Activated T-helper 1 cell treated with anti-CD3 and anti-CD28 coated beads, Interleukin-12 subunit alpha, Interleukin-12 subunit beta, Interleukin-2, Interleukin-4 antibody, amounts not matched to agents 30 ng/mL and 10 ng/mL and 1 ng/mL, durations not matched to agents 14 hours and 24 hours and 36 hours (primary cell): ENCODE measurements at regions of chr14 and their contacts with region 1.

Region 1: DNA sequence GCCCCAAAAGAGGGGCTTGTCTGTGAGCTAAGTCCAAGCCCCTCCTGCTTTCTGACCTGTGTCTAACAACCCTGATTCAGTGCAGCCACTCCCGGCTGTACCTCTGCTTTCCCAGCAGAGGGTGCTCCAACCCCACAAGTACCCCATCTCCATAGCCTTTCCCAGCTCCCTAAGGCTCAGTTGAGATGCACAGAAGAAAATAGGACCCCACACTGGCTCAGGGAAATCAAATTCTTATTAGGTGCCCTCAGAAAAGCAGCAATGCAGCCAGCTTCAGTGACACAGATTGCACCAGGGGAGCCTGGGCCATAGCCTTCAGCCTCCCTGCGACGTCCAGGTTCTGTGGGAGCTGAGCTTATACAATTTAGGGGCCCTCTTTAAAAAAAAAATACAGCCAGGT is 49.9 kb downstream of the LRRC74A start:
- DNase-seq: peak; percentile 9
- H3K4me3 Mint-ChIP-seq: no peak overlapping the region
- H3K27ac Mint-ChIP-seq: no peak overlapping the region
- H3K4me1 Mint-ChIP-seq: no peaks in the 10 kb centered on the region
- H3K27me3 Mint-ChIP-seq: peaks cover 10% of the 10 kb centered on the region

Region 2: DNA sequence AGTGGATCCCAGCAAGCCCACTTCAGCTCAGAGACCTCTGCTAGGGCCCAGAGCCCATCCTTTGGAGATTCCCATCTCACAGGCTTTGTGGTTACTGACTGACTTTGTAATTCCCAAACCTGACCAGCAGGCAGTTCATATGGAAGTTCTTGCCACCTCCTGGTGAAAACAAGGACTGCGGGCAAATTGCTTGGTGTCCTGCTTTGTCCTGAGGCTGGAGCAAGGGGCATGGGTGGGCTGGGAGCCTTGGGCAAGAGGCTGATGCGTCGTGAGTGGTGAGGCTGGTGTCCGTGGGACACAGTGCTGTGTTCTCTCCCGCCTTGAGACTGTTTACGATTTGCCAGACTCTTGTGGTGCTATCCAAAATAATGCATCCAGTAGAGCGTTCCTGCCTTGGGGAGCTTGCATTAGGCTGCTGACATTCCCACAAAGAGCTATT is 41.1 kb after region 1 on chr14:
- intact Hi-C with region 1: loop called (anchors 1 kb)
- DNase-seq: no peak
- H3K4me3 Mint-ChIP-seq: no peak overlapping the region
- H3K27ac Mint-ChIP-seq: no peak overlapping the region
- H3K4me1 Mint-ChIP-seq: peaks cover 51% of the 10 kb centered on the region
- H3K27me3 Mint-ChIP-seq: no peaks in the 10 kb centered on the region

Region 3: DNA sequence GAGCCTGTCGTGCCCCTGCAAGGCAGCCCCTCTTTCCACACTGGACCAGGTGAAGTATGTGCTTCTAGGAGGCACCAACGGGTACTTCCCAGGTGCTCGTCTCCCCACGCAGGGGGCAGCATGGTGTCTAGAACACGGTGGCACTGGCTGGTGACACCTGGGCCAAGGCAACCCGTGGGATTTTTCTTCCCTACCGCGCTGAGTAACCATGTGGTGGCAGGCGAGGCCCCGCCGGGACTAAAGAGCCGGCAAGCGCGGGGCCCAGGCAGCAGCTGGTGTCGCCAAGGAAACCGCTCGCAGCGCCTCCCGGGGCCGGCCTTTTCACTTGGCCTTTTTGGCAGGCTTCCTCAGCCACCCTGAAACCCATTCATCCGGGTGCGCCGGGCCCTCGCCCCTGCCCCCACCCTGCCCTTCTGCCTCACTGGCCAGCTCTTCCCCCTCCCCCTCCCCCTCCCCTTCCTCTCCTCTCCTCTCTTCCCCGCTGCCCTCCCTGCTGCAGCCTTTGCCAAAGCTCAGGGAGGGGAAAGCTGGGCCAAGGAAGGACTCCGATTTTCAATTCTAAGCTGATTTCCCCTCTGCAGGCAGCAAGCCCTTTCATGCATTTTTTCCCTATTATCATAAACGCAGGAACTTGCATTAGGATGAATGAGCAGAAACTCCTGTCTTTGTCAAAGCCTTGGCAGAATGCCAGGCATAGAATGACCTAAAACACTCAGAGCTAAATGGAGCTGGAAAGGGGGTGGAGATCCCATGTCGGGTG is 71.2 kb after region 1 on chr14:
- intact Hi-C with region 1: loop called (anchors 1 kb)
- DNase-seq: peak; percentile 56
- H3K4me3 Mint-ChIP-seq: no peak overlapping the region
- H3K27ac Mint-ChIP-seq: peak overlapping the region; percentile 23
- H3K4me1 Mint-ChIP-seq: peaks cover 41% of the 10 kb centered on the region
- H3K27me3 Mint-ChIP-seq: no peaks in the 10 kb centered on the region

Region 4: GRCh38 chr14:77053046-77053841 is 177.2 kb after region 1 on chr14:
- intact Hi-C with region 1: loop called (anchors 1 kb)
- DNase-seq: peak; percentile 53
- H3K4me3 Mint-ChIP-seq: no peak overlapping the region
- H3K27ac Mint-ChIP-seq: peak overlapping the region; percentile 52
- H3K4me1 Mint-ChIP-seq: peaks cover 19% of the 10 kb centered on the region
- H3K27me3 Mint-ChIP-seq: peaks cover 2% of the 10 kb centered on the region

Region 5: DNA sequence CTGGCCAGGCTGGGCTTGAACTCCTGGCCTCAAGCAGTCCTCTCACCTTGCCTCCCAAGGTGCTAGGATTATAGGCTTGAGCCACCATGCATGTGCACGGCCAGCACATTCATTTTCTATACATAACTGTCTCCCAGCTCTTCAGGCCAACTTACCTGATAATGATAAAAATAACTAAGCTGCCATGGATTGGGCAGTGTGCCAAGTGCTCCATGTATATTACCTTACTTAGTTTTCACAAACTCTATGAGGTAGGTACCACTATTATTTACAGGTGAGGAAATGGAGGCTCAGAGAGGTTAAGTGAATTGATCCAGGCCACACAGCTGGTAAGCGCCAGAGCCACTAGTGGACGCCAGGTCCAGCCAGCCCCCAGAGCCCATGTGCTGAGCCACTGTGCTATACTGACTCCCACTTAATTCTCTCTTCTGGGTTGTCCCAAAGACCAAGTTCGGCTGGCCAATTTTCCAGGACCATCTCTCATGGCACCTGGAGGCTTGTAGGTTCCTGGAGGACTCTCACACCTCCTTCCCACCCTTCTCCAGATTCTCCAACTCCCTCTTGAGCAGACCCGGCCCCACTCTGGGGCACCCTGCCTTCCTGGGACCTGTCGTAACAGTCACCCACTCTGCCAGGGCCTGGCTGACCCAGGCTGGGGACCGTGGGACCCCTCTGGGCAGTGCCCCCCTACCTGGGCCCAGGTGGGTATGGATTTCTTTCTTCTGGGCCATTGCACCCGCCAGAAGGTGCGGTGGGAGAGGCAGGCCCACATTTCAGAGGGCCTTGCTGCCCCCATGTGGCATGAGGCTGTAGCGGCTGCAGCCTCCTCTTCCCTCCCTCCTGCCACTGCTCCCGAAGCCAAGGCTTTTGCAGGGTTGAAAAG is 191.8 kb after region 1 on chr14:
- intact Hi-C with region 1: loop called (anchors 1 kb)
- DNase-seq: peak; percentile 27
- H3K4me3 Mint-ChIP-seq: no peak overlapping the region
- H3K27ac Mint-ChIP-seq: no peak overlapping the region
- H3K4me1 Mint-ChIP-seq: no peaks in the 10 kb centered on the region
- H3K27me3 Mint-ChIP-seq: peaks cover 14% of the 10 kb centered on the region

Region 6: GRCh38 chr14:77151918-77152588 is 276.0 kb after region 1 on chr14:
- intact Hi-C with region 1: loop called (anchors 1 kb)
- DNase-seq: no peak
- H3K4me3 Mint-ChIP-seq: no peak overlapping the region
- H3K27ac Mint-ChIP-seq: no peak overlapping the region
- H3K4me1 Mint-ChIP-seq: no peaks in the 10 kb centered on the region
- H3K27me3 Mint-ChIP-seq: peaks cover 20% of the 10 kb centered on the region

Region 7: DNA sequence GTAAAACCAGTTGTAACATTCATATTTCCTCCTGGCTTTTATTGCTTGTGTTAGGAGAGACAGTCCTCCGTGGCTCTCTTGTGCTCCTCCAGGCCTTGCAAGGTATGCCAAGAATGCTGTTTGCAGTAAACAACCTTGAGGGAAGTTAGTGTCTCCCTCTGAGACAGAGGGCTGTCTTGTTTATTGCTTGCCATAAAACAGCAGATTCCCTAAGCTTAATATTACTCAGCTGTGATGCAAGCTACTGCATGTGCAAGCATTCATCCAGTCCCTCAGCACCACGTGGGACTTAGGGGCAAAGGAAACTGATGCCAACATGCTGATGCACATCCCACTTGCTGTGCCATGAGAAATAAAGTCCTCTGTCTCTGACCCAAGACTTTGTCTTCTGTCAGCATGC is 438.0 kb after region 1 on chr14:
- intact Hi-C with region 1: loop called (anchors 10 kb)
- DNase-seq: no peak
- H3K4me3 Mint-ChIP-seq: no peak overlapping the region
- H3K27ac Mint-ChIP-seq: no peak overlapping the region
- H3K4me1 Mint-ChIP-seq: peaks cover 1% of the 10 kb centered on the region
- H3K27me3 Mint-ChIP-seq: no peaks in the 10 kb centered on the region